Ascending aorta (tissue), 2 donors: ENCODE measurements at regions of chr12 and their contacts with region 1.

Region 1: GRCh38 chr12:111396726-111397445 is 8.8 kb upstream of the SH2B3 start:
- DNase-seq: peak in 1 of 2 donors; percentile 90
- H3K4me3 ChIP-seq: peak overlapping the region; percentile 35 to 54
- H3K27ac ChIP-seq: peak overlapping the region; percentile 6 to 47
- H3K4me1 ChIP-seq: no peaks in the 10 kb centered on the region
- H3K27me3 ChIP-seq: no peaks in the 10 kb centered on the region
- CTCF ChIP-seq: peak; percentile 98 to 99 (median 98)

Region 2: DNA sequence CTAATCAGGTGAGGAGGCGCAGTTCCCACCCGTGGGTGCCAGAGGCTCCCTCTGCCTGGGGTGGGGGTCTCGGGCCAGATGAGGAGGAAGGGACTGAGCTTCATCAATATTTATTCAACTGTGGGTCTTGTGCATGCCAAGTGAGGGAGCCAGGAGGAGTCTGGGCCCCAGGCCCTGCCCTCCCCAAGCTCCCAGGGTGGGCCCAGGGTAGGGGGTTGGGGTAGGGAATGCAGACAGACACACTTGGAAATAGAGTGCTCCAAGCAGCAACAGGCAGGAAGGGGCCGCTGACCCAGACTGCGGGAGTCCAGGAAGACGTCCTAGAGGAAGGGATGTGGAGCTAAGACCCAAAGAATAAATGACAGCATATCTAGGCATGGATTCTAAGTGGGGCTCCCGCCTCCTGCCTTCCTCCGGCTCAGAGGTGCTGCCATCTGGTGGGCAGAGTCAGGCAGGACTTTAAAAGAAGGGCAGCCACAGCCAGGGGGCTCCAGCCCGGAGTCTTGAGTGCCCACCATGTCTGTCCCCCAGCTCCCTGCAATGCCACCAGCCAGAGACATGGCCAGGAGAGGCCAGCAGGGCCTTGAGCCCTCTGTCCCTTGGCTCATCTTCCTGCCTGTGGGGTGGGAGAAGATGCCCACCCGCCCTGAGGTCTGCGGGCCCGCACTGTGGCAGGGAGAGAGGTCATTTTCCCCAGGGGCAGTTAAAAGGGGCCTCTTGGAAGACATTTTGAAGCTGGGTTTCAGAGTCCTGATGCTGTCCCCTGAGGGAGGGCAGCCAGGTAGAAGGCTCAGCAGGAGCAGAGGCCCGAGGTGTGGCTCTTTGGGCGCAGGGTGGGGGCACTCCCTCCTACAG is 98.1 kb before region 1 on chr12:
- intact Hi-C with region 1: no loop called
- DNase-seq: no peak
- H3K4me3 ChIP-seq: no peak overlapping the region
- H3K27ac ChIP-seq: no peak overlapping the region
- H3K4me1 ChIP-seq: no peaks in the 10 kb centered on the region
- H3K27me3 ChIP-seq: no peaks in the 10 kb centered on the region
- CTCF ChIP-seq: peak; percentile 30 to 54 (median 44)

Region 3: DNA sequence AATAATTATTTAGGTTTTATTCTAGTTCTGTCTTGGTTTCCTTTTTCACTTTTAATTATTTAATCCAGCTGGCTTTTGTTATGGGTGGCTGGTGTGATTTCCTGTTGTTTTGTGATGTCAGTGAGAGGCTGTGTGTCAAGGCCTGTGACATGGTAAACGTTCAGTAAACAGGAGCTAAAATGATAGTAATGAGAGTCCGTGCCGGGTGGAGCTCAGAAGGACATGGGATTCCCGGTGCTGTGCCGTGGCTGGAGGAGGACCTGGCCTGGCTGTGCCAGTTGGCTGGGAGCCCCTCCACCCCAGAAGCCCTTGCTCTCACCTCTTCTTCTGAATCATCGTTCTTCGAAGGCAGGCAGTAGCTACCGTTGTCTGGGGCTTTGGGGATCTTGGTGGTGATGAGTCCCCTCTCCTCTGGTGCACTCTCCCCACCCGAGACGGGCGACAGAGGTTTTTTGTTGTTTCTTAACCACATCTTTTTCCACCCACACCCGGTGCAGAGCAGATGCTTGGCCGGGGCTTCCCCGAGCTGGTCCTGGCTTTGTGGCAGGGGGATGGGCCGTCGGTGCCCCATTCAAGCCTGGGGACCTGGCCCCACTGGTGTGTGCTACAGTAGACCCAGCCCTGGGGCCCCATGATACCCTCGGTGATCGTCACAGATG is 37.9 kb after region 1 on chr12:
- intact Hi-C with region 1: loop called (anchors 2 kb)
- DNase-seq: peak in 1 of 2 donors; percentile 79
- H3K4me3 ChIP-seq: peak overlapping the region; percentile 16 to 33
- H3K27ac ChIP-seq: peak overlapping the region; percentile 43 to 72
- H3K4me1 ChIP-seq: peaks cover 19 to 39% of the 10 kb centered on the region in 2 donors
- H3K27me3 ChIP-seq: no peaks in the 10 kb centered on the region
- CTCF ChIP-seq: no peak

Region 4: DNA sequence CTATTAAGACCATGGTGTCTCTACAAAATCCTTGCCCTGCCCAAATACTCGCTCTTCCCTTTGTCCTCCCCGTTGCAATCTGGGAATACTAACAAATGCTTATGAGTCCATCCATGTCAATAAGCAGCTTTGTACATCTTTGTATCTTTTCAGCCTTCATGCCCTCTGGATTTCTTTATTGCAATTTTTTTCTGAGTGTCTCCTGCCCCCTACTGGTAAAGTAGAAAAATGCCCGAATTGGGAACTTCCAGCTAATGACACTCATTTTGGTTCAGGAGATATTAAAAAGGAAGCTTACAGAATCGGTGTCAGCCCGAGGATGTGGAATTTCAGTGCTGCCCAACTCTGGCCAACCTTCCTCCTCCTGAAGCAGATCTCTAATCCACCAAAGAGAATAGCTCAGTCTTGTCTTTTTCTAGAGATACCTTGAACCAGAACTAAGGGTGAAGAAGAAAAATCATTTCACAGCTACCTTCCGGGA is 54.8 kb after region 1 on chr12:
- intact Hi-C with region 1: loop called (anchors 1 kb)
- DNase-seq: no peak
- H3K4me3 ChIP-seq: no peak overlapping the region
- H3K27ac ChIP-seq: no peak overlapping the region
- H3K4me1 ChIP-seq: no peaks in the 10 kb centered on the region
- H3K27me3 ChIP-seq: no peaks in the 10 kb centered on the region
- CTCF ChIP-seq: peak; percentile 55 to 74 (median 68)

Region 5: DNA sequence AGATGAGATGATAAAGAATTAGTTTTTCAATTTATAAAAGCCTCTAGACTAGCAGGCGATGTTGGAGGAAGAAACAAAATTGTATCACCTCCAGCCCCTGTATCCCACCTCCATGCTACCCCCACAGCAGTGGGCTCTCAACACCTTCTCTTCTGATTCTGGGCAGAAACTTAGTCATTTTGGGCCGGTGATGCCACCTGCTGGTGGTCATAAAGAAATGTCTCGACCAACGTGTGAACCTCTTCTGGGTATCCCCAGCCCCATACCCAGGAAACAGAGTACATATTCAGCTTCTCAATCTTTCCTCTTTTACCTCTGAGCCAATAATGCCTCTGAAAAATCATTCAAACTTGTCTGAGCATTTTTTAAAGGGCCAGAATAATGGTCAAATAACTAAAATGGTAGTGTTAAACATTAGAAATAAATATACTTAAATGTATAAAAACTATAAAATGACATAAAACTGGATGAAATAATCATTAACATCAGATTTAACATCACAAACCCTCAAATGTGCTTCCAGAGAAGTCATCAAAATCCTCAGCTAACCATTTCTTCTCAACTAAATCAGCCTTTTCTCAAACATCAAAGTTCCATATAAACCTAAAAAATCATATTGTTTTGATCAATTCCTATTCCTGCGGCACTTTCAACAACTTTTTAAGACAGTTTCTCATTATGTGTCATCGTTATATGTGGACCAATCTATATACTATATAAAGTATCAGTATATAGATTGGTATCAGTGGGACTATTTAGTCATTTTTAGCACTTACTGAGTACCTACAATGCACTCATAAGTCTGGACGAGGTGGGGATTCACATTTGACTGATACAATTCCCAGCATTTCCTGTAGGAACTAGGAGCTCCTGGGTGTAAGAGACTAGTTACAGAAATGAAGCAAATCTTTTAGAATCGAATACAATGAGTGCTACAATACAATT is 132.8 kb after region 1 on chr12:
- intact Hi-C with region 1: loop called (anchors 1 kb)
- DNase-seq: no peak
- H3K4me3 ChIP-seq: no peak overlapping the region
- H3K27ac ChIP-seq: no peak overlapping the region
- H3K4me1 ChIP-seq: no peaks in the 10 kb centered on the region
- H3K27me3 ChIP-seq: no peaks in the 10 kb centered on the region
- CTCF ChIP-seq: peak; percentile 26 to 61 (median 53)

Region 6: GRCh38 chr12:111584959-111585358 is 188.1 kb after region 1 on chr12:
- intact Hi-C with region 1: no loop called
- DNase-seq: no peak
- H3K4me3 ChIP-seq: no peak overlapping the region
- H3K27ac ChIP-seq: no peak overlapping the region
- H3K4me1 ChIP-seq: peaks cover 0 to 7% of the 10 kb centered on the region in 2 donors
- H3K27me3 ChIP-seq: no peaks in the 10 kb centered on the region
- CTCF ChIP-seq: no peak

Region 7: DNA sequence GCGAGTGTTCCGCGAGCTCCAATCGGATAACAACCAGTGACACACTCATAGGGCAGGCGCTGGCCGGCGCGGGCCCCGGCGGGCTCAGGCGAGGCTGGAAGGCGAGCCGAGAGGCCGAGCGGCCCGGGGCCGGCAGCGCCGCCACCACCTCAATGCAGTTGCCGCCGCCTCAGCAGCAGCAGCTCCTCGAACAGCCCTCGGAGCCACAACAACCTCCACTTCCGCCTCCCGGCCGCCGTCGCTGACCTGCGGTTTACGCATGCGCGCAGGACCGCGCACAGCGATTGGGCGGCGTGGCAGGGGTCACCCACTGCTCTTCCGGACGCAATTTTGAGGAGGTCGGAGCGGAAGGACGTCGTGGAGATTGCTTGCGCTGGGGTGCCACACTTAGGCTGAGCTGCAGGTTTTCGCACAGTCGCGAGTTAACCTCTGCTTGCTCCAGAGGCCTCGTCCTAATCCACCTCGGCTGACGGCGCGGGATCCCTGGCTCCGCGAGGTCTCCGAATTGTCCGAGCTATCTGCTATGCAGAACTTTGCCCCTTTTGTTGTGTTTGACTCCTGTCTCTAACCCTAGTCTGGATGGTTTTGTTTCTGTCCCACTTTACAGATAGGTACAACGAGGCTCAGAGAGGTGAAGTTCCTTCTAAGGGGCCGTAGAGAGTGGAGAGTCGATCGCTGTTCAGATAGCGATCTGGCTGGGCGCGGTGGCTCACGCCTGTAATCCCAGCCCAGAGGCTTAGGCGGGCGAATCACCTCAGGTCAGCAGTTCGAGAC is 289.0 kb after region 1 on chr12 and contains the starts of genes ACAD10 and BRAP:
- intact Hi-C with region 1: loop called (anchors 5 kb)
- DNase-seq: peak; percentile 71 to 96
- H3K4me3 ChIP-seq: peak within 1 kb of the TSS; percentile 78 to 88
- H3K27ac ChIP-seq: peak within 1 kb of the TSS; percentile 82 to 88
- H3K4me1 ChIP-seq: peaks cover 10 to 18% of the 10 kb centered on the region in 2 donors
- H3K27me3 ChIP-seq: no peaks in the 10 kb centered on the region
- CTCF ChIP-seq: no peak
- total RNA-seq, gene ACAD10: 32.0 TPM
- total RNA-seq, gene BRAP: 6.2 TPM

Region 8: DNA sequence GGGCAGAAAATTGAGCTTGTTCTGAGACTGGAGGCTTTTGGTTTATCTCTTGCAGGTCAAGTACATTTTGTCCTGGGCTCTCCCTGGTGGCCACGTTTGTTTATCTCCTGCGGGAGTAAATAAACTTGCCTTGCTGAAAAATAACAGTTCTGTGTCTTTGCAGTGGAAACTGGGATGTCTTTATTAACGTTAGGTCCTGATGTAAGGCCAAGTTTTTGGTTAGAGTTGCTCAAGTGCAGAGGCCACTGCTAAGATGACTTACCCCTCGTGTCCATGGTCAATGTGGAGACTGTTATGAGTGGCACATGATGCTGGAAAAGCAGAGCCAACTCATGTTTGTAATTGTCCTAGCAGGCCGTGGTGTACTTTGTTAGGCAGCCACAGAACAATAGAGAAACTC is 1025.6 kb after region 1 on chr12:
- intact Hi-C with region 1: no loop called
- DNase-seq: peak in 1 of 2 donors; percentile 50
- H3K4me3 ChIP-seq: no peak overlapping the region
- H3K27ac ChIP-seq: no peak overlapping the region
- H3K4me1 ChIP-seq: peaks cover 7 to 43% of the 10 kb centered on the region in 2 donors
- H3K27me3 ChIP-seq: no peaks in the 10 kb centered on the region
- CTCF ChIP-seq: no peak